ENCODE measurements at regions of chr11 and their contacts with region 1.

Region 1: DNA sequence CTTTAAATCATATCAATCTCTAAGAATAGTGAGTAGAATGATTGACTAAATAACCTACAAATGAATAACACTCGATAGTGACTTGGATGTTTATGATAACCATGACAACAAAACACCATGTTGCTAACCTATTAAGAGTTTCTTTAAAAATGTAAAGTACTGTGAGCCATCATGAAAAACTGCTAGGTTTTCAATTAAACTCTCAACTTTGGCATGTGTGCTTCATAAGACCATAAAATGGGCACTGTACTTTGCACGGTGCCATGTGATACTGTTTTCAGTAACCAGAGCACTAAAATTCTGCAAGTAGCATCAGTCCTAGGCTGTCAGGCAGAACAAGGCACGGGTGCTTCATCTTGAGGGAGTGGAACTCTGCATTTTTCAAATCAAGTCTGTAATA is 96.2 kb upstream of the TRIM77 start:
- DNase-seq: peak; percentile 20
- H3K4me3 ChIP-seq: no peak overlapping the region
- H3K27ac ChIP-seq: no peak overlapping the region
- H3K4me1 ChIP-seq: no peaks in the 10 kb centered on the region
- H3K27me3 ChIP-seq: no peaks in the 10 kb centered on the region
- CTCF ChIP-seq: no peak
- POLR2A ChIP-seq: no peak

Region 2: DNA sequence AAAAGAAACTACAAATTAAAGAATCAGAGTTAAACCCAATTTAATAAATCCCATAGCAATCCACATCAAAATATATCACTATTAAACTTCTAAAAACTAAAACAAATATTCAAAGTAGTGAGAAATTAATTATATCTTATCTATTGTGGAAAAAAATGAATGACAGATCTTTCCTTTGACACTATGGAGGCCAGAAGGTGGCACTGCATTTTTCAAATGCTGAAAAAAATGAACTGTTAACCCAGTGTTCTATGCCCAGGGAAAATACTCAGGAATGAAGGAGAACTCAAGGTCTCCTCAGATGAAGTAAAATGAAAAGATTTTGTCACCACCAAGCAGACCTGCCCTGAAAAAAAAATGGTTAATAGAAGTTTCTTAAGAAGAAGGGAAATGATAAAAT is 408.5 kb before region 1 on chr11:
- CTCF ChIA-PET with region 1: interaction called, 5 read pairs
- POLR2A ChIA-PET with region 1: no interaction called
- dilution Hi-C with region 1: no loop called
- intact Hi-C with region 1: loop called (anchors 1 kb)
- DNase-seq: peak; percentile 47
- H3K4me3 ChIP-seq: no peak overlapping the region
- H3K27ac ChIP-seq: no peak overlapping the region
- H3K4me1 ChIP-seq: no peaks in the 10 kb centered on the region
- H3K27me3 ChIP-seq: no peaks in the 10 kb centered on the region
- CTCF ChIP-seq: peak in 1 of 2 donors; percentile 23
- POLR2A ChIP-seq: no peak

Region 3: DNA sequence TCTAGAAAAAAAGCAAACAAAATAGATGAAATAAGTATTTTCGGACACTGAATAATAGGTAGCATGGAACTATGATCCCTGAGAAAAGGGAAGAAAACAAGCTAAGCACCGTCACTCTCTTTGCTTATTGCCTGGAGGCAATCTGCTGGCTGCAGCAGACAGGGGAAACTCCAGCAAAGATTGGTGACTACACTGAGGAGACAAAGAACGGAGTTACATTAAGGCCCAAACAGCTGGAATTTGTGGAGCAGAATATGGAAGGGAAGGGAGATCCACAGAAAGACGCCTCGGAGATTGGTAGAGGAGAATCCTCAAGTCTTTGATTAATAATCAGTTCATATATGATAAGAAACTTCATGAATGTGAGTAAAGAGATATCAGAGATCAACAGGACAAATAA is 286.0 kb before region 1 on chr11:
- CTCF ChIA-PET with region 1: interaction called, 15 read pairs
- POLR2A ChIA-PET with region 1: no interaction called
- dilution Hi-C with region 1: no loop called
- intact Hi-C with region 1: loop called (anchors 1 kb)
- DNase-seq: no peak
- H3K4me3 ChIP-seq: no peak overlapping the region
- H3K27ac ChIP-seq: no peak overlapping the region
- H3K4me1 ChIP-seq: no peaks in the 10 kb centered on the region
- H3K27me3 ChIP-seq: no peaks in the 10 kb centered on the region
- CTCF ChIP-seq: no peak
- POLR2A ChIP-seq: no peak